Activated B cell treated with CpG ODN at 0.5 μM for 24 hours (primary cell): ENCODE measurements at regions of chr7 and their contacts with region 1.

Region 1: DNA sequence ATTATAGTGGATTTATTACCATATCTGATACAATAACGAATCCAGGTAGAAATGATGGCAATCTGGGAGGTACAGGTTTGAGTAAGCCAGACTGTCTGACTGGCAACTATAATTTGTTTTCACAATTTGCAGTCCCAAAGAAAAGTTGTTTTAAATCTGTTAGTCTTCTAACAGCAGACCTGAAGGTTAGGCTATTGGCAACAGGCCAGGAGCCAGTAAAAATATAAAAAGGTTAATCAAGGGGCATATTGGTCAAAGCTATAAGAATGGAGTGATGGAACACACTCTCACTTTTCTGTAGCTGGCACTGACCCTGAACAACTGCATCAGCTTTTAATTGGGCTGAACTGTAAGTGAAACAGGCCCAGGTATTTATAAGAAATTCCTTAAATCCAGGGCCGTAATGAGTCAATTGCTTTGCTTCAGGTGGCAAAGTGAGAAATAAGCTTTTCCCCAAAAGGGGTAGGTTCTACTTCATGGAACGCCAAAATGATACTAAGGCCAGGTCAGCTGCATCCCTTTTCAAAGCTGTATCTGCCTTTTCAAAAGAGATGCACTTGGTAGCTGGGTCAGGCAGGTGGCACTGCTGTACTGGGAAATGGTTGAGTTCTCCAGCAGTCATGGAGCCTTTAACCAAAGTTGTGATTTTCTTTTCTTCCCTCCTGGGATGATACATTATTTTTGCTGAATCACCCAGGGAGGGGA is 7.0 kb upstream of the GPR22 start:
- DNase-seq: no peak
- ATAC-seq: peak; percentile 75
- H3K4me3 Mint-ChIP-seq: no peak overlapping the region
- H3K27ac Mint-ChIP-seq: no peak overlapping the region
- H3K4me1 Mint-ChIP-seq: no peaks in the 10 kb centered on the region
- H3K27me3 Mint-ChIP-seq: no peaks in the 10 kb centered on the region
- CTCF ChIP-seq: no peak

Region 2: DNA sequence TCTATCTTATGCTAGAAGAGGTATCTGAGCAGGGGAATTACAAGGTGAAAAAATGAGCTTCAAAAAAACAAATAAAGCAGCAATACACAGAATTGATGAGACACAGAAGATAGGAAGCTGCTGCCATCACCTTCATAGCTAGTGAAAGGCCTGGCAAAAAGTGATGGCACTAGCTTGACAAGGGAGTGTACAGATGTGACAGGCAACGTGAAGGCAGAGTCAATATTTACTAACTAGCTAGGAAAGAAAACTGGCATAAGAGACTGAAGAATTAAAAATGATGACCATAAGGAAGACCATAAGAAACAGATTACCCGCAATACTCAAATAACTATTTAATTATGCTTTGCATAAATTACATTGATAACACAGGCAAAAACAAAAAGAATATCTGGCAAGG is 16.4 kb after region 1 on chr7:
- CTCF ChIA-PET with region 1: interaction called, 13 read pairs
- POLR2A ChIA-PET with region 1: no interaction called
- intact Hi-C with region 1: no loop called
- DNase-seq: no peak
- ATAC-seq: no peak
- H3K4me3 Mint-ChIP-seq: no peak overlapping the region
- H3K27ac Mint-ChIP-seq: no peak overlapping the region
- H3K4me1 Mint-ChIP-seq: peaks cover 2% of the 10 kb centered on the region
- H3K27me3 Mint-ChIP-seq: no peaks in the 10 kb centered on the region
- CTCF ChIP-seq: no peak

Region 3: DNA sequence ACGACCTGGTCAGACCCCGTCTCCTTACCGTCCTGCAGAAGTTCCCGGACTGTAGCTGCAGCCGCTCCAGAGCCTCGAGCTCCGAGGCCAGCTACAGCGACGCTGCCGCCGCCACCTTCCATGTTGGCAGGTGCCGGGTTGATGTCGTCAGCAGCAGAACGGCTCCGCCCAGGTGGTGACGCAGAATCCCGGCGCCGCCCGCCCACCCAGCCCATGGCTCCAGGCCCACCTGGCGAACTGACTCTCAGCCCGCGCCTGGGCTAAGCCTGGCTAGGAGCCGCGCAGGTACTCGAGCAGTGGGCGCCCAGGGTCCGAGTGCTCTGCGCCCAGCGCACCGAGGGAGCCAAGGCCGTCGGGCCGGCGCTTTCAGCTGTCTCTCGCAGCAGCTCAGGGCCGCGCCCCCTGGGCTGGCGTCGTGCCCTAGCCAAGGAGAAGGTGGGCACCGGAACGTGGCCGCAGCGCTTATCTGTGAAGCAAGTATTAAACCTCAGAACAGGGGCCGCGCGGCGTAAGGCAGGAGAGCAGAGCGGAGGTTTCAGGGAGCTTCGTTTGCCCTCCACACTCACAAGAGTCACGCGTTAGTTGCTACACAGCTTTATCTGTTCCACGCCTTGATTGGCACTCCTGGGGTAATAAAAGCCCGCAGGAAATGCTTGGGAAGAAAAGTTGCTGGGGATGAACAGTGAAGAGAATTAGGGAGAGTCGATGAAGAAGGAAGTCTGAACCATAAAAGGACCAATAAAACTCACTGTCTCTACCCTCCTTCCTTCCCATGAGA is 101.1 kb after region 1 on chr7 and contains the starts of genes COG5 and DUS4L:
- CTCF ChIA-PET with region 1: no interaction called
- POLR2A ChIA-PET with region 1: interaction called, 20 read pairs
- intact Hi-C with region 1: no loop called
- DNase-seq: peak; percentile 83
- ATAC-seq: peak; percentile 93
- H3K4me3 Mint-ChIP-seq: peak within 1 kb of the TSS; percentile 93
- H3K27ac Mint-ChIP-seq: peak within 1 kb of the TSS; percentile 82
- H3K4me1 Mint-ChIP-seq: peaks cover 43% of the 10 kb centered on the region
- H3K27me3 Mint-ChIP-seq: no peaks in the 10 kb centered on the region
- CTCF ChIP-seq: no peak
- total RNA-seq, gene COG5: 40.6 and 47.0 TPM in 2 replicates
- total RNA-seq, gene DUS4L: 11.0 and 14.6 TPM in 2 replicates

Region 4: DNA sequence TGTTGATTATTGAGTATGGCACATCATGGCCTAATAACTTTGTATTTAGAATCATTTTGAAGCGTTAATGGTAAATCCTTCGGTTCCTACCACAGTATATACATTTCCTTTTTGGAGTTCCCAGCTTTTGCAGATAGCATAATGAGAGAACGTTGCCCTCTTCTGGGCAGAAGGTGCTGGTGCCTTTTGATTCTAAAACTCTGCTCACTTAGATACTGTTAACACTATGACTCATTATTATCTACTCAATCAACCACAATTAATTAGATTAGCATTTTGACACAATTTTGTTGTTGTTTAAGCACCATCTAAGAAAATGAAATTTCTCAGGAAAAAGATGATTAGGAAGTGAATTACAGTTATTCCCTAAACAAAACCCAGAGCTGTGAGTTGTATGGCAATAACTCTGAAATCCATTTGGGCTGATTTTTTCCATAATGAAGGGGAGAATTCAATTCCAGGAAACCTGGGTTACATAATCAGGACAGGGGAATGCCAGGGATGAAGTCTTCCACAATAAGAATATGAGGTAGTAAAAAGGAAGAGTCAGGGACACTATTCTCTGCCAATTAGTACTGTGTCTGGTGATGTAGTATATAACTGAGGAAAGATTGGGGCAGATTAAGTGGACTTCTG is 416.6 kb after region 1 on chr7:
- CTCF ChIA-PET with region 1: interaction called, 21 read pairs
- POLR2A ChIA-PET with region 1: no interaction called
- intact Hi-C with region 1: loop called (anchors 1 kb)
- DNase-seq: no peak
- ATAC-seq: peak; percentile 74
- H3K4me3 Mint-ChIP-seq: no peak overlapping the region
- H3K27ac Mint-ChIP-seq: no peak overlapping the region
- H3K4me1 Mint-ChIP-seq: peaks cover under 1% of the 10 kb centered on the region
- H3K27me3 Mint-ChIP-seq: peaks cover 20% of the 10 kb centered on the region
- CTCF ChIP-seq: no peak